ENCODE measurements at regions of chr12 and their contacts with region 1.

Region 1: GRCh38 chr12:121626087-121626852 is at the start of gene ORAI1:
- DNase-seq: peak; percentile 91 to 98 (median 95)
- ATAC-seq: peak; percentile 70
- H3K4me3 ChIP-seq: peak within 1 kb of the TSS; percentile 89
- H3K4me3 Mint-ChIP-seq: peak within 1 kb of the TSS; percentile 99
- H3K27ac ChIP-seq: peak within 1 kb of the TSS; percentile 90 to 96
- H3K27ac Mint-ChIP-seq: peak within 1 kb of the TSS; percentile 99
- H3K4me1 ChIP-seq: peaks cover 52% of the 10 kb centered on the region
- H3K4me1 Mint-ChIP-seq: peaks cover 53% of the 10 kb centered on the region
- H3K27me3 ChIP-seq: no peaks in the 10 kb centered on the region
- H3K27me3 Mint-ChIP-seq: no peaks in the 10 kb centered on the region
- CTCF ChIP-seq: no peak
- total RNA-seq, gene ORAI1: 39.7 to 42.3 TPM

Region 2: GRCh38 chr12:120276734-120277133 is 1349.5 kb before region 1 on chr12:
- CTCF ChIA-PET with region 1: no interaction called
- POLR2A ChIA-PET with region 1: no interaction called
- intact Hi-C with region 1: no loop called
- DNase-seq: no peak
- ATAC-seq: no peak
- H3K4me3 ChIP-seq: no peak overlapping the region
- H3K4me3 Mint-ChIP-seq: no peak overlapping the region
- H3K27ac ChIP-seq: no peak overlapping the region
- H3K27ac Mint-ChIP-seq: no peak overlapping the region
- H3K4me1 ChIP-seq: no peaks in the 10 kb centered on the region
- H3K4me1 Mint-ChIP-seq: no peaks in the 10 kb centered on the region
- H3K27me3 ChIP-seq: no peaks in the 10 kb centered on the region
- H3K27me3 Mint-ChIP-seq: no peaks in the 10 kb centered on the region
- CTCF ChIP-seq: no peak

Region 3: GRCh38 chr12:121499929-121500793 is 126.1 kb before region 1 on chr12:
- CTCF ChIA-PET with region 1: interaction called, 4 read pairs
- POLR2A ChIA-PET with region 1: interaction called, 5 read pairs
- intact Hi-C with region 1: loop called (anchors 1 to 2 kb)
- DNase-seq: peak; percentile 44 to 86 (median 72)
- ATAC-seq: peak; percentile 87
- H3K4me3 ChIP-seq: no peak overlapping the region
- H3K4me3 Mint-ChIP-seq: no peak overlapping the region
- H3K27ac ChIP-seq: no peak overlapping the region
- H3K27ac Mint-ChIP-seq: peak overlapping the region; percentile 49
- H3K4me1 ChIP-seq: peaks cover 16% of the 10 kb centered on the region
- H3K4me1 Mint-ChIP-seq: peaks cover 4% of the 10 kb centered on the region
- H3K27me3 ChIP-seq: no peaks in the 10 kb centered on the region
- H3K27me3 Mint-ChIP-seq: no peaks in the 10 kb centered on the region
- CTCF ChIP-seq: peak; percentile 94

Region 4: DNA sequence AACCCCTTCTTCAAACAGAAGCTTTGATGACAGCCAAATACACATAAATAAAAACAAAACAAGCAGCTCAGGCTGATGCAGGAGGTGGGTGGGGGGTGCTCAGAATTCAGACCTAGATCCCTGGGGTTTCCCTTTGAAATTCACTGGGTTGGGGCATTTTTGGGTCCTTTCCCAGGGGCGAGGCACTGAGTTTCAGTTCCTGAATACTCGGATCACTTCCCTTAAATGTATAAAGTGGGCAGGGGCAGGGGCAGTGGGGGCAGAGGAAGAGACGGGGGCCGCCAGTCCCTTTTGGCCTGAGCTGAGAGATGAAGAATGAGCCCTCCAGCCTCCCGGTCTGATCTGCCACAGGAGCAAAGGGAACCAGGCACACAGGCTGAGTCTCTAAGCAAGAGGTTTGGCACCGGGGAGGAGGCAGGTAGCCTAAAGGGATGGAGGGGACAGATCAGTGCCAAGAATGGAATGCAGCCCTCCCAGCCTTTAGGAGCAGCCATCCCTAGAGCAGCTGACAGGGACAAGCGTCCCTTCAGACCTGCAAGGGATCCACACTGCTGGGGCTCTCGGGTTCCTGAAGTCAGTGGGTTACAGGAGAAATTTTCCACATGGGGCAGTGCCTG is 65.8 kb before region 1 on chr12:
- CTCF ChIA-PET with region 1: interaction called, 62 read pairs
- POLR2A ChIA-PET with region 1: no interaction called
- intact Hi-C with region 1: no loop called
- DNase-seq: peak in 2 of 14 experiments; percentile 63 to 67
- ATAC-seq: no peak
- H3K4me3 ChIP-seq: no peak overlapping the region
- H3K4me3 Mint-ChIP-seq: no peak overlapping the region
- H3K27ac ChIP-seq: no peak overlapping the region
- H3K27ac Mint-ChIP-seq: no peak overlapping the region
- H3K4me1 ChIP-seq: peaks cover 9% of the 10 kb centered on the region
- H3K4me1 Mint-ChIP-seq: no peaks in the 10 kb centered on the region
- H3K27me3 ChIP-seq: no peaks in the 10 kb centered on the region
- H3K27me3 Mint-ChIP-seq: no peaks in the 10 kb centered on the region
- CTCF ChIP-seq: no peak

Region 5: DNA sequence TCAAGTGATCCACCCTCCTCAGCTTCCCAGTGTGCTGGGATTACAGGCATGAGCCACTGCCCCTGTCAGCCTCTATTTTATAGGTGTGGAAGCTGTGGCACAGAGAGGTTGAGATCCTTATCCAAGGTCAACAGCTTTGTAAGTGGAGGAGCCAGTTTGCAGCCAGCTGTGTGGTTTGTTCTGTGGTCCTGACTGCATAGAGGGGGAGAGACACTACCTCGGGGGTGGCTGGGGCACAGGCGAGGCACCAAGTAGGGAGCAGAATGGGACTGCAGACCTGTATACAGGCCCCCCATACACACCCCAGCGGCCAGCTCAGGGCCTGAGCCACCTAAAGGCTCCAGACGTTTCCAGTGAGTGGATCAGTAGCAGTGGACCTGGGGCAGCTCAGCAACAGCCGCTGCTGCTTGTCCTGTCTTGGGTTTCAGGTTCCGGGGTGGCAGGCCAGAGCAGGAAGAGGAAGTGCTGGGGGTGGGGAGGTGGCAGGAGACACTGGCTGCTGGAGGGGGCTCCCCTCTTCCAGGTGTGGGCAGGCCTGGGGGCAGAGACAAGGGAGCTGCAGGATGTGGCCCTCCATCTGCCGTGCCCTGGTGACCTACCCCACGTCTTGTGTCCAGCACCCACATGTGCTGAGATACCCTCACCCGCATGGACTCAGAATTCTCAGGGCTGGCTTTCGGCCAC is 11.1 kb after region 1 on chr12:
- CTCF ChIA-PET with region 1: interaction called, 5 read pairs
- POLR2A ChIA-PET with region 1: interaction called, 76 read pairs
- intact Hi-C with region 1: no loop called
- DNase-seq: peak in 13 of 14 experiments; percentile 30 to 83 (median 52)
- ATAC-seq: peak; percentile 77
- H3K4me3 ChIP-seq: peak overlapping the region; percentile 38
- H3K4me3 Mint-ChIP-seq: peak overlapping the region; percentile 72
- H3K27ac ChIP-seq: peak overlapping the region; percentile 74 to 80
- H3K27ac Mint-ChIP-seq: peak overlapping the region; percentile 91
- H3K4me1 ChIP-seq: peaks cover 70% of the 10 kb centered on the region
- H3K4me1 Mint-ChIP-seq: peaks cover 62% of the 10 kb centered on the region
- H3K27me3 ChIP-seq: no peaks in the 10 kb centered on the region
- H3K27me3 Mint-ChIP-seq: no peaks in the 10 kb centered on the region
- CTCF ChIP-seq: no peak

Region 6: DNA sequence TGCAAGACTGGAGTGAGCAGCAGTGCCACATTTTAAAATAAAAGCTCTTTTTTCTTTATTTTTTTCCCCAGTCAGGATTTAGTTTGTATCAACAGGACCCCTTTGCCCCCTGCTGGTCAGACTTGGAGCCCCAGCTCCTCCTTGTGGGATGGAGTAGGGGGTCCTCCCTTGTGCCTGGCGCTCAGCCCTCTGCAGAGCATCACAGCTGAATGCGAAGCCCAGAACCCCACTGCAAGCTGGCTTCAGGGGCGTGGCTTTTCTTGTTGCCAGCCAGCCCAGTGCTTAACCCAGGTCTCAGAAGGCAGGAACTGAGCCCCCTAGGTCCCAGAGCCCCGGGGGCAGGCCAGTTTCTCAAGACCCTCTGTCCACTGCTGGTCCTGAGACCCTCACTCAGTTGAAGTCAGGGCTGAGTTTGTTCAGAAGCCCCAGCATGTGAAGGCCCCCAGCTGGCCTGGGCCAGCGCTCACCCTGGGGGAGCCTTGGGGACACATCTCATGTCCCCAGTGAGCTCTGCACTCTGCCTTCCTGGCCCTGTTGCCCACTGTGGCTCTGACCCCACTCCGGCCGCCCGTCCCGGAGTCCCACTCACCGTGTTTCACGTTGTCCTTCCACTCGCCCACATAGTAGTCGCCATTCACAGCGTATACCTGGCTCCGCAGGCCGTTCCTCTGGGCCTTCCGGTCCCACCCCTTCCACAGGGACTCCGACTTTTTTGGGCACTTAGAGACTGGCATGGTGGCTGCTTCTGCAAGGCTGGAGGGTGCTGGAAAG is 42.7 kb after region 1 on chr12:
- CTCF ChIA-PET with region 1: interaction called, 45 read pairs
- POLR2A ChIA-PET with region 1: interaction called, 193 read pairs
- intact Hi-C with region 1: loop called (anchors 1 to 2 kb)
- DNase-seq: peak; percentile 38 to 81 (median 59)
- ATAC-seq: no peak
- H3K4me3 ChIP-seq: no peak overlapping the region
- H3K4me3 Mint-ChIP-seq: peak overlapping the region; percentile 65
- H3K27ac ChIP-seq: no peak overlapping the region
- H3K27ac Mint-ChIP-seq: peak overlapping the region; percentile 83
- H3K4me1 ChIP-seq: peaks cover 83% of the 10 kb centered on the region
- H3K4me1 Mint-ChIP-seq: peaks cover 66% of the 10 kb centered on the region
- H3K27me3 ChIP-seq: no peaks in the 10 kb centered on the region
- H3K27me3 Mint-ChIP-seq: no peaks in the 10 kb centered on the region
- CTCF ChIP-seq: peak; percentile 77

Region 7: DNA sequence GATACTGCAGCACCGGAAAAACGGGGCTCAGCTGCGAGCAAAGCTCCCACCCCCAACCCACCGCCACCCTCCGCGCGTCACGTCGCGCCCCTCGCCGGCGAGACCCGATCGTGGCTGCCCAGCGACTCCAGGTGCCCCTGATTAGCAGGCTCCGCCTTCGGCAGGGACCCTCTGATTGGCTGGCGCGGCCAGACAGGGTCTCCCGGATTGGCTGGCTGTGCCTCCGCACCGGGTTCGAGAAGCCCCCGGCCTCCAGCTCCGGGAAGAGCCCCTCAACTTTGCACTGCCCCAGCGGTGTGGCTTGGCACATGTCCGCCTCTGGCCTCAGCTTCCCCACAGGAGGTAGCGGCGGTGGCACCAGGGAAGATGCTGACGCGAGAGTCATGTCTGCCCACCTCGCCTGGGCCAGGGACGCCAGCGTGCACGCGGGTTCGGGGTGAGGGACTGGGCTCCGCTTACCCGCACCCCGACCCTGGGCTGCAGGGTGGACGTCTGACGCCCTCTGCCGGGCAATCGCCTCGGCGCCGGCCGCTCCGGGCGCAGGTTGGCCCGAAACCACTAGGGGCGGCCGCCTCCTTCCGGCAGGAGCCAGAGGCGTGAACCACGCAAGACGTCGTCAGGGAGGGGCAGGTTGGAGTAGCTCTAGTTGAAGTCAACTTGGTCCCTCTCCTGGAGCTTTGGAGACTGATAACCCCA is 167.7 kb after region 1 on chr12:
- CTCF ChIA-PET with region 1: interaction called, 7 read pairs
- POLR2A ChIA-PET with region 1: interaction called, 13 read pairs
- intact Hi-C with region 1: loop called in 1 of 2 experiments (anchors 5 kb)
- DNase-seq: peak; percentile 90 to 98 (median 95)
- ATAC-seq: peak; percentile 48
- H3K4me3 ChIP-seq: peak overlapping the region; percentile 94
- H3K4me3 Mint-ChIP-seq: peak overlapping the region; percentile 85
- H3K27ac ChIP-seq: peak overlapping the region; percentile 94 to 99
- H3K27ac Mint-ChIP-seq: peak overlapping the region; percentile 97
- H3K4me1 ChIP-seq: peaks cover 94% of the 10 kb centered on the region
- H3K4me1 Mint-ChIP-seq: peaks cover 72% of the 10 kb centered on the region
- H3K27me3 ChIP-seq: no peaks in the 10 kb centered on the region
- H3K27me3 Mint-ChIP-seq: no peaks in the 10 kb centered on the region
- CTCF ChIP-seq: peak; percentile 97

Region 8: GRCh38 chr12:122980183-122981046 is 1354.1 kb after region 1 on chr12 and contains the start of gene ARL6IP4:
- CTCF ChIA-PET with region 1: no interaction called
- POLR2A ChIA-PET with region 1: no interaction called
- intact Hi-C with region 1: no loop called
- DNase-seq: peak; percentile 33 to 80 (median 58)
- ATAC-seq: peak; percentile 75
- H3K4me3 ChIP-seq: peak within 1 kb of the TSS; percentile 82
- H3K4me3 Mint-ChIP-seq: peak within 1 kb of the TSS; percentile 94
- H3K27ac ChIP-seq: peak within 1 kb of the TSS; percentile 68
- H3K27ac Mint-ChIP-seq: peak within 1 kb of the TSS; percentile 92
- H3K4me1 ChIP-seq: peaks cover 90% of the 10 kb centered on the region
- H3K4me1 Mint-ChIP-seq: peaks cover 56% of the 10 kb centered on the region
- H3K27me3 ChIP-seq: no peaks in the 10 kb centered on the region
- H3K27me3 Mint-ChIP-seq: no peaks in the 10 kb centered on the region
- CTCF ChIP-seq: no peak
- total RNA-seq, gene ARL6IP4: 140 to 142 TPM